Head of caudate nucleus (tissue), 42 donors: ENCODE measurements at regions of chr12 and their contacts with region 1.

Region 1: GRCh38 chr12:70242695-70243509 is at the start of gene CNOT2:
- DNase-seq: peak; percentile 78 to 97 (median 91)

Region 2: DNA sequence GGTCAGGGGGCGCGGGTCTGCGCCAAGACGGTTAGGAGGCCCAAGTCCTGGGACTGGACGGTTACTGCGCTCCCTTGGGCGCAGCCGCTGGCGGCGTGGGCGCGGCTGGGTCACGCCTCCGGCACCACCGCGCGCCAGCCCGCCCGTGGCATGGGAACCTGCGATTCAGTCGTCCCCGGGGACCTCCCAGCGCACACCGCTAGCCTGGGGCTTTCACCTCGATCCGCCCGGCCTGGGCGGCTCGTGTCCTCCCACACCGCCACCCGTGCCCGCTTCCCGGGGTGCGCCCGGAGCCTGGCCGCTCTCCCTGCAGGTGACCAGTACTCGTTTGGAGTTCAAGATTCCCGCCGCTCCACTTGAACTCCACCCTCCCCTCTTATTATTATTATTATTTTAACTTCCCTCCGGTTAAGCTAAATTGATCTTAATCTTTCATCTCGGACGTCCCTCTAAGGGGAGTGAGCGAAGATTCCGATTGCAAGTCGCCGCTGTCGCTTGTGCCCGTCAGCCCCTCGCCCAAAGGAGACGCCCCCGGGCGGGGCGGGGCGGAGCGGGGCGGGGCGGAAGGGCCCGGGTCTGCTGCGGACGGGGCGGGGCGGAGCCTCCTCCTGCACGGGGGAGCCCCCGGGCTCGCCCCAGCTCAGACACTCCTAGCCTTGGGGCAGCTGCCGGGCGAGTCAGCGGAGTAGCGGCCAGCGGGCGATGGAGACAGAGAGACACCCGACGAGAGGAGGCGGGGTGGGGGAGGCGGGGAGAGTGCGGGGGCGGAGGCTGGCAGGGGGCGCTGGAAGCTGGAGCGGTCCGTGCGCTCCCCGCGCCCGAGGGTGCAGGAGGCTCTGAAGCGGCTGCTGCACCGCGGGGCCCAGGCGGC is 123.0 kb after region 1 on chr12 and contains the start of gene KCNMB4:
- intact Hi-C with region 1: loop called (anchors 5 kb)
- DNase-seq: peak; percentile 75 to 95 (median 87)

Region 3: GRCh38 chr12:70427614-70428013 is 184.7 kb after region 1 on chr12:
- intact Hi-C with region 1: no loop called
- DNase-seq: no peak